H1 (cell line): ENCODE measurements at regions of chr5 and their contacts with region 1.

Region 1: DNA sequence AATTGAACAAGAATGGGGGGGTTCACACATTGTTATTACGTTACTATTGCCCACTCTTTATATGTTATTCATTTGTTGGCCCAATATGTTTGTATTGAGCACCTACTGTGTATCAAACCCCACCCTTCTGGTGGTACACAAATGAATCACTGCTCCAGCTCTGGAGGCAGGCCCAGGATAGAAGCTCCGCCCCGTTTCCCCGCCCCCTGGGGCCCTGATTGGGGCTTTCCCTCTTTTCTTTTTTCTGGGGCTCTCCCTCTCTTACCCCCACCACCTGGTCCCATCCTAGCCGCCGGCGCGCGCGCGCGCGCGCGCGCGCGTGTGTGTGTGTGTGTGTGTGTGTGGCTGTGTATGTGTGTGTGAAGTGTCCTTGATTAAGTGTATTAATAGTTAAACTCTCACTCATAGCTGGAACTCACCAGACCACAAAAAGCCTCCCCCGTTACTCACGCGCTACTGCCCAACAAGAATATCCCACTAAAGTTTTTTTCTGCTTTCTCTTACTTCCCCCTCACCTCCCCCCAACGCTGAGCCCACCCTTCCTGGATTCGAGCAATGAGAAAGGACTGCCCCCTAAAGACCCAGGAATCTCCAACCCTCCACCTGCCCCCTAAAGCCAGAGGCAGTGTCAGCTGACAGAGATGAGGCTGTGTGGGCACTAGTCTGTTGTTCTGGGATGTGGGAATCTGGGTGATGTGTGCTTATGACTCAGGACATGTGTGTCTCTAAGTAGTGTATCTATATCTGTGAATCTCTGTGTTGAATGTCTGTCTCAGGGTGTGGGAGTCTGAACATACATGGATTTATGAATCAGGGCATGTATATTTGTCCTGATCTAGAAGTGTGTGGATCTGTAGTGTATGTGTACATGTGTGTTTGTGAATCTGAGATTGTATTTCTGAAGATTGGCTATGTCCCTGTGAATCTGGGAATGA is 4.0 kb downstream of the CXXC5 start:
- DNase-seq: peak in 1 of 2 experiments; percentile 90
- H3K4me3 ChIP-seq: peak overlapping the region in 3 of 4 experiments; percentile 2 to 90 (median 14); a peak in 5 of 8 replicates
- H3K27ac ChIP-seq: no peak overlapping the region
- H3K4me1 ChIP-seq: peaks cover 20 to 53% (median 50%) of the 10 kb centered on the region in 4 experiments
- H3K27me3 ChIP-seq: peaks cover 0 to 4% (median 0%) of the 10 kb centered on the region in 4 experiments; a peak in 2 of 7 replicates
- CTCF ChIP-seq: no peak
- EP300 ChIP-seq: no peak
- POLR2A ChIP-seq: no peak
- RAD21 ChIP-seq: no peak

Region 2: DNA sequence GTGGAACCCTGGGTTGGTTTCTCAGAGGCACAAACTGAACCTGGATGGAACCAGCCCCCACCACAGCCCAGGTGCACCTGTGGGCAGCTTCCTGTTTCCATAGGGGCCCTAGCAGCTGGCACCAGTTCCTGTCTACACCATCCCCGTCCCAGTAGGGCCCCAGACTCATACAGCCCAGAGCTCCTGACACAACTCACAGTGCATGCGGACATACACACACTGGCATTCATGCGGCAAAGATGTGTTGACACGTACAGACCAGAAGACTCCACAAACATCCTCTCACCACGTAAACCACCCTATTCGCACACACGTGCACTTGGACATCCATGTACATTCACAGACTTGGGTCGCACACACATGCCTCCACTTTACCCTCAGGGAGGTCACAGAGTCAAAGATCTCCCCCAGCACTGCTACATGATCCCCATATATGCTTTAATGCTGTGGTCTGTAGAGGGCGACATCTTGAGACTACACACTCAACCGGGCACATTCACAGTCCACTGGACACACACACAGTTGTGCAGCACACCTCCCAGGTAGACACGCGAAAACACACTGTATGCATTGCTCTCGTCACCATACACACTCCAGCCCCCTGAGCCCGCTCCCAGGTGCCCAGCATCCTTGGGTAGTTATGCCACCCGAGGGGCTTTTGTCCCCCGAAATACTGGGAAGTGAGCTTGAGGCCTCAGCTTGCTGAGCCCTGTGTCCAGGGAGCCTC is 18.4 kb after region 1 on chr5:
- CTCF ChIA-PET with region 1: interaction called, 45 read pairs
- POLR2A ChIA-PET with region 1: interaction called, 13 read pairs
- DNase-seq: no peak
- H3K4me3 ChIP-seq: no peak overlapping the region
- H3K27ac ChIP-seq: no peak overlapping the region
- H3K4me1 ChIP-seq: peaks cover 9 to 55% (median 43%) of the 10 kb centered on the region in 4 experiments
- H3K27me3 ChIP-seq: no peaks in the 10 kb centered on the region
- CTCF ChIP-seq: peak in 1 of 3 experiments; percentile 50; a peak in 1 of 4 replicates
- EP300 ChIP-seq: no peak
- POLR2A ChIP-seq: no peak
- RAD21 ChIP-seq: no peak

Region 3: GRCh38 chr5:139678751-139679750 is 26.9 kb after region 1 on chr5:
- CTCF ChIA-PET with region 1: interaction called, 12 read pairs
- POLR2A ChIA-PET with region 1: interaction called, 5 read pairs
- DNase-seq: no peak
- H3K4me3 ChIP-seq: no peak overlapping the region
- H3K27ac ChIP-seq: no peak overlapping the region
- H3K4me1 ChIP-seq: peaks cover 8 to 43% (median 26%) of the 10 kb centered on the region in 4 experiments
- H3K27me3 ChIP-seq: no peaks in the 10 kb centered on the region
- CTCF ChIP-seq: no peak
- EP300 ChIP-seq: no peak
- POLR2A ChIP-seq: no peak
- RAD21 ChIP-seq: no peak

Region 4: DNA sequence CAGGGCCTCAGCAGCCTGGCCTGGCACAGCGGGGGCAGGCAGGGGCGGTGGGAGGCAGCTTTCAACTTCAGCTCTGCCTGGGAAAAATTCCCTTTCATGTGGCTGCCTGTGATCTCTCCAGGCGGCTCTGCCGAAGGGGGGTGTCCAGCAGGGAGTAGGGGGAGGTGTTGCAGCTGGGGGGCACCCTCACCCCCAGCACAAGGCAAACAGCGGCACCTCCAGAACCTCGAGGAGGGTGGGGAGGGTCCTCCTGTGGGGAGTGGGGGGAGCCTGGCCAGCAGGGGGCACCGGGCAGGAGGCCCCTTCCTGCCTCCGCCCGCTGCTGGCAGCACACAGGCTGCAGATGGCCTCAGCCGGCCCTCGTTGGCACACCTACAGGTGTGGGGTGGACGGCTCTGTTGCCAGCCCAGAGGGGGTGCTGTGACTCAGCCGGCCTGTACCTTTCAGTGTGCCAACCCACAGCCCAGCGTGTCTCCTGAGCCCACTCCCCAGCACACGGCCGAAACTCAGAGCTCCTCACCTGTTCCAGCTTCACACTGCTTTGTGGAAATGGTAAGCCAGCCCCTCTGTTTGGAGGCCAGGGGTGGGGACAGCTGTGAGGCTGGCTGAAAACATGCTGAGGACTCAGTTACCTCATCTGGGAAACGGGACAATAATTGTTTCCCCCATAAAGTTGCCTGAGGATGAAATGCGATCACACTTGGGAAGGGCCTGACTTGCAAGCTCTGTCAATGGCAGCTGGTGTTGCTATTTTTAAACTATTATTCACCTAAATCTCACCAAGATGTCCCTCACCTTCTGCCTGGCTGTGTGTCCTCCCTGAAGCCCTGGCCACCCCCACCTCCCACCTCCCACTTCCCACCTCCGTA is 33.0 kb after region 1 on chr5:
- CTCF ChIA-PET with region 1: interaction called, 16 read pairs
- POLR2A ChIA-PET with region 1: interaction called, 21 read pairs
- DNase-seq: no peak
- H3K4me3 ChIP-seq: no peak overlapping the region
- H3K27ac ChIP-seq: no peak overlapping the region
- H3K4me1 ChIP-seq: peaks cover 37 to 67% (median 57%) of the 10 kb centered on the region in 4 experiments
- H3K27me3 ChIP-seq: no peaks in the 10 kb centered on the region
- CTCF ChIP-seq: peak in 1 of 3 experiments; percentile 27; a peak in 2 of 4 replicates
- EP300 ChIP-seq: no peak
- POLR2A ChIP-seq: no peak
- RAD21 ChIP-seq: peak in 1 of 2 experiments; percentile 25; a peak in 2 of 4 replicates

Region 5: GRCh38 chr5:139690064-139690802 is 38.1 kb after region 1 on chr5:
- CTCF ChIA-PET with region 1: interaction called, 16 read pairs
- POLR2A ChIA-PET with region 1: interaction called, 21 read pairs
- DNase-seq: no peak
- H3K4me3 ChIP-seq: no peak overlapping the region
- H3K27ac ChIP-seq: no peak overlapping the region
- H3K4me1 ChIP-seq: peaks cover 27 to 51% (median 43%) of the 10 kb centered on the region in 4 experiments
- H3K27me3 ChIP-seq: peaks cover 0 to 5% (median 0%) of the 10 kb centered on the region in 4 experiments; a peak in 3 of 7 replicates
- CTCF ChIP-seq: no peak
- EP300 ChIP-seq: no peak
- POLR2A ChIP-seq: no peak
- RAD21 ChIP-seq: 0 out of 4 replicates have a peak, but pooled peaks of 1 of the 2 experiments have one; percentile 19

Region 6: GRCh38 chr5:139696894-139697658 is 45.0 kb after region 1 on chr5:
- CTCF ChIA-PET with region 1: interaction called, 11 read pairs
- POLR2A ChIA-PET with region 1: interaction called, 21 read pairs
- DNase-seq: no peak
- H3K4me3 ChIP-seq: peak overlapping the region; percentile 28 to 58 (median 34); a peak in 7 of 8 replicates
- H3K27ac ChIP-seq: 0 out of 2 replicates have a peak overlapping the region, but pooled peaks have one; percentile 20
- H3K4me1 ChIP-seq: peaks cover 24 to 51% (median 38%) of the 10 kb centered on the region in 4 experiments
- H3K27me3 ChIP-seq: peaks cover 0 to 4% (median under 1%) of the 10 kb centered on the region in 4 experiments; a peak in 4 of 7 replicates
- CTCF ChIP-seq: no peak
- EP300 ChIP-seq: no peak
- POLR2A ChIP-seq: peak in 1 of 2 experiments; percentile 51; a peak in 1 of 3 replicates
- RAD21 ChIP-seq: no peak